ENCODE measurements at regions of chr14 and their contacts with region 1.

Region 1: GRCh38 chr14:83071888-83072501 is 1538.3 kb upstream of the SEL1L start:
- DNase-seq: peak; percentile 54
- H3K4me3 Mint-ChIP-seq: no peak overlapping the region
- H3K27ac Mint-ChIP-seq: no peak overlapping the region
- H3K4me1 Mint-ChIP-seq: no peaks in the 10 kb centered on the region
- H3K27me3 Mint-ChIP-seq: no peaks in the 10 kb centered on the region
- CTCF ChIP-seq: no peak

Region 2: GRCh38 chr14:82710267-82710841 is 361.6 kb before region 1 on chr14:
- CTCF ChIA-PET with region 1: interaction called, 6 read pairs
- POLR2A ChIA-PET with region 1: no interaction called
- intact Hi-C with region 1: loop called (anchors 1 kb)
- DNase-seq: peak; percentile 73
- H3K4me3 Mint-ChIP-seq: no peak overlapping the region
- H3K27ac Mint-ChIP-seq: no peak overlapping the region
- H3K4me1 Mint-ChIP-seq: no peaks in the 10 kb centered on the region
- H3K27me3 Mint-ChIP-seq: no peaks in the 10 kb centered on the region
- CTCF ChIP-seq: peak; percentile 66

Region 3: GRCh38 chr14:82999802-83000201 is 72.2 kb before region 1 on chr14:
- CTCF ChIA-PET with region 1: interaction called, 14 read pairs
- POLR2A ChIA-PET with region 1: no interaction called
- intact Hi-C with region 1: no loop called
- DNase-seq: peak; percentile 41
- H3K4me3 Mint-ChIP-seq: no peak overlapping the region
- H3K27ac Mint-ChIP-seq: no peak overlapping the region
- H3K4me1 Mint-ChIP-seq: no peaks in the 10 kb centered on the region
- H3K27me3 Mint-ChIP-seq: no peaks in the 10 kb centered on the region
- CTCF ChIP-seq: peak; percentile 34

Region 4: DNA sequence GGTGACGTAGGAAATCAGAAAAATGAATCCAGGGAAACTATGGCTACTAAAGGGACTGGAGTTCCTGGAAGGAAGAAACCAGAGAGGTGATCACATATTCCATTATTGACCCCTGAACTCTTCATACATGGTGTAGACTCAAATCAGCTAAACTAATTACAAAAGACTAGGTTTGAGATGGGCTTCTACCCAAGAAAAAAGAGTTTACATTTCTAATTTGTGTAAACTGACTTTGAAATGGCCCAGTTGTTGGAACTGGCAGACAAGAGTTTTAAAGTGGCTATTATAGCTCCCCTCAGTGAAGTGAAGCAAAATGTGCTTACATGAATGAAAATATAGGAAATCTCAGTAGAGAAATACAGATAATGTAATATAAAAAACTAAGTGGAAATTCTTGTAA is 81.1 kb after region 1 on chr14:
- CTCF ChIA-PET with region 1: no interaction called
- POLR2A ChIA-PET with region 1: no interaction called
- intact Hi-C with region 1: no loop called
- DNase-seq: no peak
- H3K4me3 Mint-ChIP-seq: no peak overlapping the region
- H3K27ac Mint-ChIP-seq: no peak overlapping the region
- H3K4me1 Mint-ChIP-seq: no peaks in the 10 kb centered on the region
- H3K27me3 Mint-ChIP-seq: no peaks in the 10 kb centered on the region
- CTCF ChIP-seq: no peak